ENCODE measurements at regions of chr18 and their contacts with region 1.

Region 1: GRCh38 chr18:67104700-67105284 is 411.7 kb downstream of the DSEL start:
- DNase-seq: peak; percentile 77
- H3K4me3 Mint-ChIP-seq: no peak overlapping the region
- H3K27ac Mint-ChIP-seq: no peak overlapping the region
- H3K4me1 Mint-ChIP-seq: no peaks in the 10 kb centered on the region
- H3K27me3 Mint-ChIP-seq: no peaks in the 10 kb centered on the region

Region 2: DNA sequence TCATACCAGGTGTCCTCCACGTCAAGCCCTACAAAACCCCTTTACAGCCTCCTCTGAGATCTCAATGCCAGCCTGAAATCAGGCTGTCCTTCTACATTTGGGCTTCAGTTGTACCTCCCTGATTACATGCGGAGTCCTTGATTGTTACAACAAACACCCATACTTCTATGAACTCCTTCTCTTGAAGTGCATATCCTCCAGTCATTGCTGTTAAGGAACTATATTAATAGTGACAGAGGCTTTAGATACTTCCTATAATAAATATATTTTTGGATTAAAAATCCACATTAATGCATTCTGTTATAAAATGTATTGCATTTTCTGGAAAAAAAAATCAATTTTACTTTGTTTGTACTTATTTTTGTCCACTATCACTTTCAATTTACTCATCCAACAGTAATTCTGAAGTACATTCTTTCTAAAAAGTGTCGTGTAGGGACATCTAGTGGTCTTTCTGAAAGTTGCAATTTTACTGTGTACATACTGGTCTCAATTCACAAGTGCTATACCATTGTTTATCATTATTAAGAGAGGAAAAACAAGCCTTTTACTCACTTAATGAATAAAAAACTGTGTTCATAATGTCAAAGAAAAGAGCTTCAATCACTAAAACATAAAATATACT is 95.3 kb after region 1 on chr18:
- intact Hi-C with region 1: loop called (anchors 1 kb)
- DNase-seq: peak; percentile 63
- H3K4me3 Mint-ChIP-seq: no peak overlapping the region
- H3K27ac Mint-ChIP-seq: no peak overlapping the region
- H3K4me1 Mint-ChIP-seq: no peaks in the 10 kb centered on the region
- H3K27me3 Mint-ChIP-seq: peaks cover 5% of the 10 kb centered on the region